ENCODE measurements at regions of chr12 and their contacts with region 1.

Region 1: DNA sequence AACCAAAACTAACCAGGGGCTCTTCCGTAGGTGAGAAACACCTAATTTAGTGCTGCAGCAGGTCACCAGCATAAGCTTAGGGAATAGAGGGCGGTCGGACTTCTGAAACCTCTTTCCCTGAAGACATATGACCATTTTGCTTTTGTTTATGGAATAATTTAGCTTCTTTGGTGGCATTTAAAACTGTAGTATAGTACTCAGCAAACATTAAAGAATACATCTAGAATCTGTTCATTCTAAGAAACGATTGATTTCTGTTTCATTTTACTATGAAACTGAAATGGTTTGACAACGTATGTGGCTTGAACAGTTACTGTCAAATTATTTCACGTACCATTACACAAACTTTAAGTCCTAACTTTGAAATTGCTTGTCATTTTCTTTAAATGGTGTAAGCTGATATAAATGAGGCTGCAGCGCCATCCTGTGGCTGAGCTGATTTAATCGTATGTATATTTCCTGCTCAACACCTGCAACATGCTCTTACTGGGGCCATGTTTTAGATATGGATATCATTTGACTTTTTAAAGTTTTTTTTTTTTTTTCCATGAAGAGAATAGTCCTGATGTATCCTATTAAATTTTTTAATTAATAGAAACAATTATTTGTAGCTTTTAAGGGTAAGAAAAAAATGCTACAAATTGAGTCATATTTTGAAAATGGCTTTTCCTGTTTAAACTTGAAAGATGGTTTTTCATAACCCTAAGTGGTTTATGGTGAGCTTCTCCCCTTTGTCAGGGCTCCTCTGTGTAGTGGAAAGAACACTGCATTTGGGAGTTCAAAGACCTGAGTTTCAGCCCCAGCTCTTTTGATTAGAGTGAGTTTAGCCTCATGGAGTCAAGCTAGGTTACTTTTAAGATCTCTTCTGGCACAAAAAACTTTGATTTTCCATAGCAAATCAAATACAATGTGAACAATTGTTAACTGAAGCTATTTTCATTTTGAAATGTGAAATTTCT is 27.4 kb downstream of the CFAP54 start:
- DNase-seq: peak; percentile 83
- H3K4me3 ChIP-seq: no peak overlapping the region
- H3K27ac ChIP-seq: peak overlapping the region; percentile 5
- H3K27me3 ChIP-seq: no peaks in the 10 kb centered on the region
- CTCF ChIP-seq: peak; percentile 59

Region 2: DNA sequence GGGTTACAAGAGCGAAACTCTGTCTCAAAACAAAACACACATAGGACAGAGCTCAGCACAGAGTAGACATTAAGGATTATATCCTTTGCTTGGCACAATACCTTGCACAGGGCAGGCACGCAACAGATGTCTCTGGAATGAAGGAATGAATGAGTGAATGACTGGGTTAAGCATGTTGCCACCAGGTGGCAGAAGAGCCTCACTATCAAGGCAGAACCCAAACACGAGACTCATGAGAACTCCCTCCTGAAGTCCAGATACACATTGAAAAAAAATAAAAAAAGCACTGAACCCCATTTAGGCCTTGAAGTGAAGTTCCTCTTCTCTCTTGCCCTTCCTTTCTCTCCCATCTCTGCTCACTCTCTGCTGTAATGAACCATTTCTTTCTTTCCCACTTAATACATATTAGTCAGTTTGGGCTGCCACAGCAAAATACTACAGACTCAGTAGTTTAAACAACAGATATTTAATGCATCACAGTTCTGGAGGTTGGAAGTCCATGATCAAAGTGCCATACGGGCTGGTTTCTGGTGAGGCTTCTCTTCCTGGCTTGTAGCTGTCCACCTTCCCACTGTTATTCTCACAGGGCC is 454.8 kb before region 1 on chr12:
- in situ Hi-C with region 1: loop called (anchors 25 kb)
- DNase-seq: peak; percentile 84
- H3K4me3 ChIP-seq: no peak overlapping the region
- H3K27ac ChIP-seq: no peak overlapping the region
- H3K27me3 ChIP-seq: no peaks in the 10 kb centered on the region
- CTCF ChIP-seq: peak; percentile 84

Region 3: GRCh38 chr12:96399919-96400797 is 116.6 kb before region 1 on chr12 and contains the start of gene CDK17:
- in situ Hi-C with region 1: loop called (anchors 25 kb)
- DNase-seq: peak; percentile 80
- H3K4me3 ChIP-seq: peak within 1 kb of the TSS; percentile 76
- H3K27ac ChIP-seq: peak within 1 kb of the TSS; percentile 91
- H3K27me3 ChIP-seq: no peaks in the 10 kb centered on the region
- CTCF ChIP-seq: peak; percentile 38

Region 4: GRCh38 chr12:96587691-96588090 is 70.9 kb after region 1 on chr12:
- in situ Hi-C with region 1: no loop called
- DNase-seq: no peak
- H3K4me3 ChIP-seq: no peak overlapping the region
- H3K27ac ChIP-seq: no peak overlapping the region
- H3K27me3 ChIP-seq: no peaks in the 10 kb centered on the region
- CTCF ChIP-seq: no peak

Measured in brain microvascular endothelial cell (primary cell).